ENCODE measurements at regions of chr17 and their contacts with region 1.

Region 1: GRCh38 chr17:47981462-47981861 is 10.5 kb downstream of the CDK5RAP3 start:
- DNase-seq: no peak
- CTCF ChIP-seq: no peak

Region 2: GRCh38 chr17:47864770-47865216 is 116.7 kb before region 1 on chr17:
- in situ Hi-C with region 1: no loop called
- DNase-seq: no peak
- CTCF ChIP-seq: no peak

Region 3: DNA sequence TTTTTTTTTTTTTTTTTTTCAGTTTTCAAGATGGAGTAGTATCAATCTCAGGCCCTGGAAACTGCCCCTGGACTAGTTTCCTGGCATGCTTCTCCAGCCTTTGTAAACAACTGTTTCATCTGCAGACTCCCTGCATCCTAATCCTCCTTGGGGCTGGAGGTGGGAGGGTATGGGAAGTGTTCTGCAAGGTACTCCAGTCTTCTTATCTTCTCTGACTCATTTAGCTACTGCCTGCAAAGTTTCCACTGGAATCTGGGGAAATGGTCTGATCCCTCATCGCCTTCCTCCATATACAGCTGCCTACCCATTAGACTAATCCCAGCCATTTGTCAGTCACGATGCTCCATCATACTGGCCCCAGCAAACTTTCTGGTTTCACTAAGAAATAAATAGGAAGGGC is 34.6 kb after region 1 on chr17:
- in situ Hi-C with region 1: loop called (anchors 5 kb)
- DNase-seq: no peak
- CTCF ChIP-seq: no peak

Measured in GM13976 (cell line).